Left ventricle myocardium inferior (tissue), 1 donor: ENCODE measurements at regions of chr4 and their contacts with region 1.

Region 1: DNA sequence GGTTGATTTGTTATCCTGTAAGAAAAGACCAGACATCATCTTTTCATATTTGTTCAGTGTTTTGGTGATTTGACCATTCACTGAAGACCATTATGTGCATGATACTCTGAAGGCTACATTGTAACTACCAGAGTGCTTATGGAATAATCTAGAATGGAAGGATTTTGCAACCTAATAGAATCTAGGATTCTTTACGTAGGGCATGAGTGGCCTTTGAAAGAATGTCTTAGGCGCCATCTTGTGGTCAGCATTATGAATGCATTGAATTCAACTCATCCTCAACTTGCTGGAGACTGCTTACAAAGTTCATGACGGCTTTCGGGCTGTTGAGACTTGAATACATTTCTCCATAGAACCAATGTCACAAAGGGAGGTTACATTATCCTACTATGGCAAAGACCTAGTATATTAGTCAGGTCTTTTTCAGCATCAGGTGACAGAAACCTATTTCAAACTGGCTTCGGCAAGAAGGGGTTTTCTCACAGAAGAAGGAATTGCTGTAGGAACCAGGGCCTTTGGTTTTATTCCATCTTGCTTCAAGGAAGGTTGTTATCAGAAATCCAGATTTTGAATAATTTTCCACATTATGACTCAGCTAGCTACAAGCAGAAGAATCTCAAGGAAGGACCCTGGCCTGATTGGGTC is 104.1 kb downstream of the GPAT3 start:
- DNase-seq: no peak
- H3K4me3 ChIP-seq: no peak overlapping the region
- H3K27ac ChIP-seq: no peak overlapping the region
- H3K4me1 ChIP-seq: no peaks in the 10 kb centered on the region
- H3K27me3 ChIP-seq: peaks cover 5% of the 10 kb centered on the region
- CTCF ChIP-seq: peak; percentile 88

Region 2: DNA sequence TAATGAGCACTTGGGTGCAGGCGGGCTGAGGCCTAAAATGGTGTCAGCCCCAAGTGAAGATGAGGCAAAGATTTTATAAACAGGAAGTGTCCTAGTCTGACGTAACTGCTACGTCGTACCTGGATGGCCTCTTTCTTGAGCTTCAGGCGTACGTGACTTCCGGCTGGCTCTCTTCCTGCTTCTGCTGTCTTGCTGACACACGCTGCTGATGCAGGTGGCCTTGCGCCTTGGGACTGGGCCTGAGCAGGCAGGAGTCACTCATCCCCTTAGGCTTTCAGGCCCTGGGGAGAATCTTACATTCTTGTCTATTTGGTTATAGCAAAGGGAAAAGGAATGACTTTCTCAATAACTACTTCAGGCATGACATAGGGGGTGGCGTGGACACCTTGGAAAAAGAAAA is 135.0 kb before region 1 on chr4:
- intact Hi-C with region 1: loop called (anchors 5 kb)
- DNase-seq: no peak
- H3K4me3 ChIP-seq: no peak overlapping the region
- H3K27ac ChIP-seq: no peak overlapping the region
- H3K4me1 ChIP-seq: no peaks in the 10 kb centered on the region
- H3K27me3 ChIP-seq: no peaks in the 10 kb centered on the region
- CTCF ChIP-seq: no peak

Region 3: GRCh38 chr4:83771113-83771705 is 131.2 kb after region 1 on chr4:
- intact Hi-C with region 1: no loop called
- DNase-seq: peak; percentile 27
- H3K4me3 ChIP-seq: no peak overlapping the region
- H3K27ac ChIP-seq: no peak overlapping the region
- H3K4me1 ChIP-seq: no peaks in the 10 kb centered on the region
- H3K27me3 ChIP-seq: peaks cover 23% of the 10 kb centered on the region
- CTCF ChIP-seq: peak; percentile 75

Region 4: DNA sequence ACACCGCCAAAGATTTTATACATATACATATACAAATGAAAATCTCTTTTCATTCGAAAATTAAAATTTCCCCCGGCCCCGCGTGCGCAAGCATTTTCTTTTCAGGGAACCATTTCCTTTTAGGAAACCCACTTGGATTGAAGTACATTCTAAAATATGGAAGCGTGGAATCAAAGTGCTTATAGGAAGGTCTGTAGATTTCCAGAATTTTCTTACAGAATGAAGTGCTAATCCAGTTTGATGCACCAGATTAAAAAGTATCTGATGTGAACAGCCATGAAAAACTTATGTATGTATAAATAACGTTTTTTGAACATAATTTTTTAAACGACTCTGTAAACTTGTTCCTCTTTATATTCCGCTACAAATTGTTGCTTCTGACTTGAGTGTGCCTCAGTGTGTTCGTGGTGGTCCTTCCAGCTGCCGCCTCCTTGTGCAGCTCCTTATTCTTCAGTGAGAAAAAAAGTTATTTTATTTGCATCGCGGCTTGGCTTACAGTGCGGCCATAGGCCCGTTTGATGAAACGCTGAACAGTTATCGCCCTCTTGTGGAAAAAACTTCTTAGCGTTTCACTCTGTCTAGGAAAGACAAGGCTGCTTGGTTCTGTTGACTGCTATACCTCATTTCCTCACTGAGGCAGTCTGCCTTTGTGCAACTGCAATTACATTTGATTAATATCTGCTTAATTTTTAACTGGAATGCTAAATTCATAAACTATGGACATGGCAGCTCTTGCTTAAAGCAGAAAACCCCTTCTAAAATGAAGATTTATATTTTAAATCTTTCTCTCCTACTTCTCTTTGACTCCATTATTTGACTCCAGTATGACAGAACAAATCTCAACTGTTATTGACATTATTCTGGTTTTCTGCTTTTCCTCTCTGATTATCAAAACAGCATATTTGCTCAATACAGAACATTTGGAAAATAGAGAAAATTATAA is 863.8 kb after region 1 on chr4:
- intact Hi-C with region 1: loop called (anchors 10 kb)
- DNase-seq: no peak
- H3K4me3 ChIP-seq: no peak overlapping the region
- H3K27ac ChIP-seq: no peak overlapping the region
- H3K4me1 ChIP-seq: peaks cover 20% of the 10 kb centered on the region
- H3K27me3 ChIP-seq: peaks cover 100% of the 10 kb centered on the region
- CTCF ChIP-seq: peak; percentile 69